ENCODE measurements at regions of chr6 and their contacts with region 1.

Region 1: DNA sequence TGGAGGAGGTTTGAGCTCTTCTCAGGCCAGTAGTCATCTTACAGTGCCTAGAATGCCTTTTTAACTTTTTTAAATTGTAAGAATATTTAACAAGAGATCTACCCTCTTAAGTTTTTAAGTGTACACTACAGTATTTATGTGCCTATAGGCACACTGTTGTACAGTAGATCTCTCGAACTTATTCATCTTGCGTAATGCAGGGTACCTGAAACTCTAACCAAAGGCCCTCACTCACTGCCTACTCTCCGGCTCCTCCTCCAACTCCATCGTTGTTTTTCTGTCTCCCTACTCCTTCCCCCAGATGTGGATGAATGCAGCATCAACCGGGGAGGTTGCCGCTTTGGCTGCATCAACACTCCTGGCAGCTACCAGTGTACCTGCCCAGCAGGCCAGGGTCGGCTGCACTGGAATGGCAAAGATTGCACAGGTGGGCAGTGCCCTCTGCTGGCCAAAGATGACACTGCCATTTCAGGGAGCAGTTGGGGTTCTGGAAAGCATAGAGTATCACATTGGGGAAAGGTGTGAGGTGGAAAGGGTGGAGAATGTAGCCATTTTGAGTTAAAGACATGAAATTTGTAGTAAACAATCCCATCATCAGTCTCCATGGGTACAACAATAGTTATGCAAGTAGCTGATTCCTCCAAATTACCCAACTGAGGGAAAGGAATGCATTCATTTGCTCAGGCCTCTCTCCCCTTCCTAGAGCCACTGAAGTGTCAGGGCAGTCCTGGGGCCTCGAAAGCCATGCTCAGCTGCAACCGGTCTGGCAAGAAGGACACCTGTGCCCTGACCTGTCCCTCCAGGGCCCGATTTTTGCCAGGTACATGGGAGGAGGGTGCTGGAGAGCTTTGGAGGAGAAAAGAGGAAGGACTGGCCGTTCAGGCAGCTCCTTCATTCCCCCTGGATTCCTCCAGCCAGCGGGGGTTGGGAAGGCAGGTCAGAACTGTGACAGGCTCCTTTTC is 18.4 kb upstream of the ZNF76 start:
- DNase-seq: peak; percentile 56 to 83 (median 72)
- ATAC-seq: peak; percentile 90
- H3K4me3 ChIP-seq: no peak overlapping the region
- H3K4me3 Mint-ChIP-seq: no peak overlapping the region
- H3K27ac ChIP-seq: no peak overlapping the region
- H3K27ac Mint-ChIP-seq: no peak overlapping the region
- H3K4me1 ChIP-seq: no peaks in the 10 kb centered on the region
- H3K4me1 Mint-ChIP-seq: peaks cover 3% of the 10 kb centered on the region
- H3K27me3 ChIP-seq: no peaks in the 10 kb centered on the region
- H3K27me3 Mint-ChIP-seq: no peaks in the 10 kb centered on the region
- CTCF ChIP-seq: peak; percentile 100

Region 2: GRCh38 chr6:34459899-34460593 is 781.1 kb before region 1 on chr6:
- CTCF ChIA-PET with region 1: interaction called, 5 read pairs
- POLR2A ChIA-PET with region 1: no interaction called
- intact Hi-C with region 1: loop called in 1 of 2 experiments (anchors 5 kb)
- DNase-seq: peak; percentile 12 to 75 (median 48)
- ATAC-seq: peak; percentile 79
- H3K4me3 ChIP-seq: no peak overlapping the region
- H3K4me3 Mint-ChIP-seq: no peak overlapping the region
- H3K27ac ChIP-seq: no peak overlapping the region
- H3K27ac Mint-ChIP-seq: no peak overlapping the region
- H3K4me1 ChIP-seq: no peaks in the 10 kb centered on the region
- H3K4me1 Mint-ChIP-seq: peaks cover 1% of the 10 kb centered on the region
- H3K27me3 ChIP-seq: peaks cover 0 to 7% of the 10 kb centered on the region in 2 experiments
- H3K27me3 Mint-ChIP-seq: peaks cover 10% of the 10 kb centered on the region
- CTCF ChIP-seq: peak; percentile 63

Region 3: GRCh38 chr6:35146453-35146852 is 94.7 kb before region 1 on chr6:
- CTCF ChIA-PET with region 1: interaction called, 20 read pairs
- POLR2A ChIA-PET with region 1: no interaction called
- intact Hi-C with region 1: loop called in 1 of 2 experiments (anchors 2 kb)
- DNase-seq: peak in 3 of 9 experiments; percentile 15 to 39 (median 37)
- ATAC-seq: no peak
- H3K4me3 ChIP-seq: no peak overlapping the region
- H3K4me3 Mint-ChIP-seq: no peak overlapping the region
- H3K27ac ChIP-seq: no peak overlapping the region
- H3K27ac Mint-ChIP-seq: no peak overlapping the region
- H3K4me1 ChIP-seq: no peaks in the 10 kb centered on the region
- H3K4me1 Mint-ChIP-seq: peaks cover 2% of the 10 kb centered on the region
- H3K27me3 ChIP-seq: peaks cover 1 to 3% of the 10 kb centered on the region in 2 experiments
- H3K27me3 Mint-ChIP-seq: peaks cover 14% of the 10 kb centered on the region
- CTCF ChIP-seq: no peak

Region 4: DNA sequence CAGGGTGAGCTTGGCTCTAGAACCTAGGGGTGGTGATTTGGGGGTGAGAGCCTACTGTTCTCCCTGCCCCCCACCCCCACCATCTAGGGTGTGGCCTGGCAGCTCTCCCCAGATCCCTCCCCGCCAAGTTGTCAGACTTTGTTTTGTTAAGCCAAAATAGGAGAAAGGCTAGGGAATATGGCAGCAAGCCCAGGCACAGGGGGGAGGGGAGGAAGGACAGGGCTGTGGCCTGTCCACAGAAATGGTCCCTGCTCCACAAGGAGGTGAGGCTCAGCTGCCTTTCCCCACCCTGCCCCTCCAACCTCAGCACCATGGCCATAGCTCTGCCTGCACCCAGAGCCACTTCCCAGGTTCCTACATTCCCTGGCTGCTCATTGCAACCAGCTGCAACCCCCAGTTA is 10.2 kb before region 1 on chr6:
- CTCF ChIA-PET with region 1: interaction called, 70 read pairs
- POLR2A ChIA-PET with region 1: interaction called, 3 read pairs
- intact Hi-C with region 1: no loop called
- DNase-seq: no peak
- ATAC-seq: no peak
- H3K4me3 ChIP-seq: no peak overlapping the region
- H3K4me3 Mint-ChIP-seq: no peak overlapping the region
- H3K27ac ChIP-seq: no peak overlapping the region
- H3K27ac Mint-ChIP-seq: no peak overlapping the region
- H3K4me1 ChIP-seq: no peaks in the 10 kb centered on the region
- H3K4me1 Mint-ChIP-seq: no peaks in the 10 kb centered on the region
- H3K27me3 ChIP-seq: no peaks in the 10 kb centered on the region
- H3K27me3 Mint-ChIP-seq: no peaks in the 10 kb centered on the region
- CTCF ChIP-seq: no peak

Region 5: GRCh38 chr6:35287671-35288396 is 46.7 kb after region 1 on chr6:
- CTCF ChIA-PET with region 1: interaction called, 14 read pairs
- POLR2A ChIA-PET with region 1: no interaction called
- intact Hi-C with region 1: no loop called
- DNase-seq: no peak
- ATAC-seq: no peak
- H3K4me3 ChIP-seq: no peak overlapping the region
- H3K4me3 Mint-ChIP-seq: no peak overlapping the region
- H3K27ac ChIP-seq: no peak overlapping the region
- H3K27ac Mint-ChIP-seq: no peak overlapping the region
- H3K4me1 ChIP-seq: no peaks in the 10 kb centered on the region
- H3K4me1 Mint-ChIP-seq: no peaks in the 10 kb centered on the region
- H3K27me3 ChIP-seq: no peaks in the 10 kb centered on the region
- H3K27me3 Mint-ChIP-seq: no peaks in the 10 kb centered on the region
- CTCF ChIP-seq: no peak

Region 6: GRCh38 chr6:35311390-35312075 is 70.4 kb after region 1 on chr6:
- CTCF ChIA-PET with region 1: no interaction called
- POLR2A ChIA-PET with region 1: no interaction called
- intact Hi-C with region 1: no loop called
- DNase-seq: peak; percentile 19 to 84 (median 64)
- ATAC-seq: peak; percentile 72
- H3K4me3 ChIP-seq: peak overlapping the region; percentile 29 to 42
- H3K4me3 Mint-ChIP-seq: peak overlapping the region; percentile 82
- H3K27ac ChIP-seq: peak overlapping the region; percentile 75 to 85
- H3K27ac Mint-ChIP-seq: peak overlapping the region; percentile 100
- H3K4me1 ChIP-seq: peaks cover 91% of the 10 kb centered on the region
- H3K4me1 Mint-ChIP-seq: peaks cover 88% of the 10 kb centered on the region
- H3K27me3 ChIP-seq: no peaks in the 10 kb centered on the region
- H3K27me3 Mint-ChIP-seq: no peaks in the 10 kb centered on the region
- CTCF ChIP-seq: no peak